ENCODE measurements at regions of chr10 and their contacts with region 1.

Region 1: DNA sequence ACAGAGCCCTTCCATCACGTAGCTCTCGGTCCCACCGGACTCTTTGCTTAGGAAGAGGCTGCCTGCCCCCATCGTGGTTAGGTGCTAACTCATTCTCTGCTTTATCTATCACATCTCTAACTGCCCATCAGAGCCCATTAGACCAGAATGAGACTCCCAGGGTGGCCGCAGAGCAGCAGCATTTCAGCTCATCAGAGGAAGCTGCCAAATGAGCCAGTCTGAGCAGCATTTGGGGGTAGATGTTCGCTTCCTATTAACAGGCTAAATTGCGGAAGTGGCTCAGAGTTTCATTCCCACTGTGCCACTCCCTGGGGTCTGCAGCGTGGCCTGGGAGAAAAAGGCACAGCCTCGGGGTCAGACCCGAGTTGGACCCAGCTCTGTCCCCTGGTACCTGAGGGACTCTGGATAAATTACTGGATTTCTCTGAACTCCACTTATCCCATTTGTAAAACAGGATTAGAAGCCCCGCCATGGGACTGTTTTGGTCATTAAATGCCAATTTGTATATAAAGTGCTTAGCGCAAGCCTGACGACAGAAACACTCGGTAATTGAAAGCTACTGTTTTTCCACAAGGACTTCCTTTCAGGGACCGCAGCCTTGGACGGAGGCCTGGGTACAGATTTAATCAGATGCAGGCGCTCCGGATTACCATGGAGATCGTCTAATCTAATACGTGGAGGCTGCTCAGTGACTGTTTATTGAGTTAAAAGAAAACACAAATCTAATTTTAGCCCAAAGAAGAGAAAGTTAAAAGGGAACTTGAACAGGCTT is 73.8 kb upstream of the PRLHR start:
- DNase-seq: peak; percentile 81
- H3K4me3 ChIP-seq: peak overlapping the region; percentile 32 to 38
- H3K27ac ChIP-seq: peak overlapping the region; percentile 29 to 99; a peak in 3 of 4 replicates
- H3K4me1 ChIP-seq: peaks cover 14 to 50% of the 10 kb centered on the region in 2 experiments; a peak in 3 of 4 replicates
- H3K27me3 ChIP-seq: no peaks in the 10 kb centered on the region; the same call in 1 of the 2 replicates
- CTCF ChIP-seq: no peak
- EP300 ChIP-seq: peak in 1 of 2 experiments; percentile 94; a peak in 2 of 4 replicates
- RAD21 ChIP-seq: no peak; the same call in none of the 2 replicates

Region 2: DNA sequence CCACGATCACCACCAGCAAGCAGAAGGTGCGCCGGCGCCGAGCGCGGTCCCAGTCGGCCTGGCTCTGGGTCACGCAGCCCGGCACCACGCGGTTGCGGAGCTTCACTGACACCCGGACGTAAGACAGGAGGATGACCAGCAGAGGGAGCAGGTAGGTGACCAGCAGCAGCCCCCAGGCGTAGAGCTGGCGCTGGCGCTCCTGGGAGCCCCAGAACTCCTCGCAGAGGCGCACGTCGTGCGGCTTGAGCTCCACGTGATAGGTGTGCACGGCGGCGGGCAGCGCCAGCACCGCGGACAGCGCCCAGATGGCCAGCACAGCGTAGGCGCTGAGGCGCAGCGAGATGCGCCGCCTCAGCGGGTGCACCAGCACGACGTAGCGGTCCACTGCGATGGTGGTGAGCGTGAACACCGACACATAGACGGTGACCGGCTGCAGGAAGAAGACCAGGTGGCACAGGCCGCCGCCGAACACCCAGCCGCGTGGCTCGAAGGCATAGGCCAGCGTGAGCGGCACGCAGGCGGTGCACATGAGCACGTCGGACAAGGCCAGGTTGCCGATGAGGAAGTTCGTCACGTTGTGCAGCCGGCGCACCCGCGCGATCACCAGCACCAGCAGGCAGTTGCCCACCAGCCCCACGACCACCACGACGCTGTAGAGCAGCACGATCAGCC is 74.7 kb before region 1 on chr10:
- CTCF ChIA-PET with region 1: interaction called, 10 read pairs
- POLR2A ChIA-PET with region 1: interaction called, 9 read pairs
- DNase-seq: peak; percentile 75
- H3K4me3 ChIP-seq: no peak overlapping the region; a peak in 1 of 4 replicates
- H3K27ac ChIP-seq: no peak overlapping the region
- H3K4me1 ChIP-seq: peaks cover 0 to 19% of the 10 kb centered on the region in 2 experiments; a peak in 2 of 4 replicates
- H3K27me3 ChIP-seq: peaks cover 10% of the 10 kb centered on the region; the same call in 1 of the 2 replicates
- CTCF ChIP-seq: peak; percentile 23; the same call in 1 of the 2 replicates
- EP300 ChIP-seq: no peak
- RAD21 ChIP-seq: no peak; the same call in 1 of the 2 replicates

Region 3: GRCh38 chr10:118610577-118610976 is 58.6 kb before region 1 on chr10:
- CTCF ChIA-PET with region 1: interaction called, 12 read pairs
- POLR2A ChIA-PET with region 1: interaction called, 12 read pairs
- DNase-seq: peak; percentile 55
- H3K4me3 ChIP-seq: no peak overlapping the region
- H3K27ac ChIP-seq: peak overlapping the region in 1 of 2 experiments; percentile 76; a peak in 2 of 4 replicates
- H3K4me1 ChIP-seq: peaks cover 0 to 34% of the 10 kb centered on the region in 2 experiments; a peak in 2 of 4 replicates
- H3K27me3 ChIP-seq: no peaks in the 10 kb centered on the region; the same call in 1 of the 2 replicates
- CTCF ChIP-seq: no peak
- EP300 ChIP-seq: peak in 1 of 2 experiments; percentile 58; a peak in 1 of 4 replicates
- RAD21 ChIP-seq: no peak

Region 4: GRCh38 chr10:118621304-118621948 is 47.8 kb before region 1 on chr10:
- CTCF ChIA-PET with region 1: interaction called, 4 read pairs
- POLR2A ChIA-PET with region 1: interaction called, 12 read pairs
- DNase-seq: peak; percentile 33
- H3K4me3 ChIP-seq: no peak overlapping the region
- H3K27ac ChIP-seq: no peak overlapping the region
- H3K4me1 ChIP-seq: peaks cover 0 to 6% of the 10 kb centered on the region in 2 experiments; a peak in 1 of 4 replicates
- H3K27me3 ChIP-seq: no peaks in the 10 kb centered on the region; the same call in 1 of the 2 replicates
- CTCF ChIP-seq: no peak
- EP300 ChIP-seq: no peak
- RAD21 ChIP-seq: no peak

Region 5: GRCh38 chr10:118682533-118682932 is 13.3 kb after region 1 on chr10:
- CTCF ChIA-PET with region 1: no interaction called
- POLR2A ChIA-PET with region 1: no interaction called
- DNase-seq: no peak
- H3K4me3 ChIP-seq: no peak overlapping the region
- H3K27ac ChIP-seq: no peak overlapping the region
- H3K4me1 ChIP-seq: peaks cover 0 to 10% of the 10 kb centered on the region in 2 experiments; a peak in 2 of 4 replicates
- H3K27me3 ChIP-seq: no peaks in the 10 kb centered on the region
- CTCF ChIP-seq: no peak
- EP300 ChIP-seq: no peak
- RAD21 ChIP-seq: no peak

Region 6: DNA sequence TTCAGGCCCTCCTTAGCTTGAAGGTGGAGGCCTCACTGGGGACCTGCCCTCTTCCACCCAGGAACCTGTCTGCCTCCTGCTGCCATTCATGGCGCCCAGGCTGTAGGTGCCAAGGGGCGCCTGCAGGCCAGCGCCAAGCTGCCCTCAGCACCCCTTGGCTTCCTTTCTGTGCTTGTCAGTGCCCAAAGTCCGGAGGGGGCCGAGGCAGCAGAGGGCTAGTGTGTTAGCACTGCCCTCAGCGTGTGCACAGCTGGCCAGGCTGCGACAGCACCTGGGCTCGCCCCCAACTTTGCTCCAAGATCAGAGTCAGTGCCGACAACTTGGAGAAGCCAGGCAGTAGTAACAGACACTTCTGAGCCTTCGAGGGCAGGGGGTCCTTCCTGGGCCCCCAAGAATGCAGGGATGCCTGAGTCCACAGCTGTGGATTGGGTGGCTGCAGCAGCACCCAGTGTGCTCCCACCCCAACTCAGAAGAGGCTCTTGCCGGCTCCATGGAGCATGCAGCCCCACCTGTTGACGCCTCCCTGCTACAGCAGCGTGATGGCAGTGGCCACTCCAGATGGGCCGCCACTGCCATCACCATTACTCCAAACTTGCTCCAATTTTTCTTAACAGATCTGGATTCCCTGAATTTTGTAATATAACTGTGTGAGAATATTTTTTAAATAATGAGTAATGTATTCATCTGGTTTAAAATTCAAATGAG is 43.9 kb after region 1 on chr10:
- CTCF ChIA-PET with region 1: interaction called, 11 read pairs
- POLR2A ChIA-PET with region 1: no interaction called
- DNase-seq: peak; percentile 36
- H3K4me3 ChIP-seq: no peak overlapping the region
- H3K27ac ChIP-seq: no peak overlapping the region; a peak in 1 of 4 replicates
- H3K4me1 ChIP-seq: no peaks in the 10 kb centered on the region; a peak in 1 of 4 replicates
- H3K27me3 ChIP-seq: no peaks in the 10 kb centered on the region
- CTCF ChIP-seq: peak; percentile 36; the same call in 1 of the 2 replicates
- EP300 ChIP-seq: no peak
- RAD21 ChIP-seq: peak; percentile 60

Region 7: DNA sequence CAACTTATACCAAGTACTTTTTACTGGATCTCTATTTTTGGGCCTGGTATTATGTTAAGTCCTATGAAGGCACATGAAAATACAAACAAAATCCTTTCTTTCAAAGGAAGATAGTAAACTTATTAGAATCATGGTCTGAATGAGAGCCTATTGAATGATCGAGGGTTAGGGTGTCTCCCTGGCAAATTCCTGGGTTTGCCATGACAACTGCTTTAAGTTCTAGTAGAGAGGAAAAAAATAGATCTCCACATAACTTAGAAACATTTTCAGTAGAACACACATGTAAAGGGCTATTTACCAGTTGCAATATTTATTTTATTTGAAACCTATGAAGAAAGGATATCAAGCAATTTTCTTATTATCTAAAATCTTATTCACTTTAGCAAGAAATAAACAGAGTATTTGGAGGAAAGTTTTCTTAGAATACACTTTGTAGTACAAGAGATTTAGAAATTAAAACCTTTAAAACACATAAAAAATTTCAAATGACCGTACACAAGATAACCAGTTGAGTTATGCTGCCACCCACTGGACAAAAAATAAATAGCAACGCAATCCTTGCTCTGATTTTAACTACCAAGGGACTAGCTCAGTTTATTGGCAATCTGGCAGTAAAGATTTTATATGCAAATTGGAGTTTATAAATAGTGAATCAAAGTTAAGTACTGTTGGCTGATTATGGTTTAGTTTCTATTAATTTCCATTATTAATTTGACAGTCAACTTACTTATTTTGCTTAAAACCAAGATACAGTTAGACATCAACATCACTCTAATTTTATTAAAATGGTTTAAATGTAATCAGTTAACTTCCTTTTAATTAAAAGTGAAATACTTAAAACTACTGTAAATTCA is 51.7 kb after region 1 on chr10:
- CTCF ChIA-PET with region 1: interaction called, 15 read pairs
- POLR2A ChIA-PET with region 1: interaction called, 5 read pairs
- DNase-seq: peak; percentile 44
- H3K4me3 ChIP-seq: no peak overlapping the region; a peak in 1 of 4 replicates
- H3K27ac ChIP-seq: no peak overlapping the region
- H3K4me1 ChIP-seq: peaks cover 5 to 13% of the 10 kb centered on the region in 2 experiments; a peak in 3 of 4 replicates
- H3K27me3 ChIP-seq: no peaks in the 10 kb centered on the region
- CTCF ChIP-seq: peak; percentile 95
- EP300 ChIP-seq: no peak
- RAD21 ChIP-seq: peak; percentile 92

Measured in SK-N-SH (cell line).